Activated CD4-positive, alpha-beta T cell treated with anti-CD3 and anti-CD28 coated beads, Interleukin-2, amount 10 ng/mL, durations not matched to agents 24 days and 14 days (primary cell): ENCODE measurements at regions of chr6 and their contacts with region 1.

Region 1: GRCh38 chr6:30742316-30743098 is at the start of gene FLOT1:
- DNase-seq: peak; percentile 98
- H3K4me3 Mint-ChIP-seq: peak within 1 kb of the TSS; percentile 98
- H3K27ac Mint-ChIP-seq: peak within 1 kb of the TSS; percentile 94
- H3K4me1 Mint-ChIP-seq: peaks cover 60% of the 10 kb centered on the region
- H3K27me3 Mint-ChIP-seq: no peaks in the 10 kb centered on the region
- total RNA-seq, gene FLOT1: 239 and 260 TPM in 2 replicates

Region 2: DNA sequence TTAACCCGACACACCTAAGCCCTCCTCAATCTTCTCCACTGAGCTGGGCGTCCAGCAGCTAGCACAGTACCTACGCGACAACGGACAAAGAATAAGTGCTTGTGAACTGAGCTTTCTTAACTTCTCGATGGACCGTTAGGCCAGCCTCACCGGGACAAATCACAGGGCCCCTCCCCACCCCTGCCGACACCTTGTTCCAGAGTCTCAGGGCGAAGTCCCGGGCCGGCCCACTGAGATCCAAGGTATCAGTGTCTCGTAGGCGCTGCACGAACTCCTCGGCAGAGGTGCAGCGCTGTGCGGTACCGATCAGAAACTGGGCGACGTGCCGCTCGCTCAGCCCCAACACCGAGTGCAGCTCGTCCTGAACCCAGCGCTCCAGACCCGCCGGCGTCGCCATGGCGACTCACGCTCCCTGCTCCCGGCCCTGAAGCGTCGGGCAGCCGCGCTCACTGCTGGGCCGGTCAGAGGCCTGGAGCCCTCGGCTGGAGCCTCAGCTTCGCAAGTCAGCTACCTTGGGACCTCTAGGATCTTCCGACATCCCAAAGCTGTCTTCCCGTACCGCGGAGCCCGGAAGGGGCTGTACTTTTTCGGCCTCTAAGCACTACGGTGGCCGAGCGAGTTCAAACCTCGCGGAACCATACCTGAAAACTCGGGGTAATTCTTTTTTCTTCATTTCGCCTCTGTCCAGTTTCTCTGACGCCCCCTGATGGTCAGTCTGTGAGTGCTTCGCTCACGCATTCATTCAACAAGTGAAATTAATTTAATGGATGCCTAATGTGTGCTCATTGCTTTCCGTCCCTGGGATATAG is 69.9 kb before region 1 on chr6 and contains the start of gene DHX16:
- intact Hi-C with region 1: no loop called
- DNase-seq: peak; percentile 97
- H3K4me3 Mint-ChIP-seq: peak within 1 kb of the TSS; percentile 80
- H3K27ac Mint-ChIP-seq: peak within 1 kb of the TSS; percentile 54
- H3K4me1 Mint-ChIP-seq: peaks cover 32% of the 10 kb centered on the region
- H3K27me3 Mint-ChIP-seq: no peaks in the 10 kb centered on the region
- total RNA-seq, gene DHX16: 53.4 and 56.7 TPM in 2 replicates

Region 3: DNA sequence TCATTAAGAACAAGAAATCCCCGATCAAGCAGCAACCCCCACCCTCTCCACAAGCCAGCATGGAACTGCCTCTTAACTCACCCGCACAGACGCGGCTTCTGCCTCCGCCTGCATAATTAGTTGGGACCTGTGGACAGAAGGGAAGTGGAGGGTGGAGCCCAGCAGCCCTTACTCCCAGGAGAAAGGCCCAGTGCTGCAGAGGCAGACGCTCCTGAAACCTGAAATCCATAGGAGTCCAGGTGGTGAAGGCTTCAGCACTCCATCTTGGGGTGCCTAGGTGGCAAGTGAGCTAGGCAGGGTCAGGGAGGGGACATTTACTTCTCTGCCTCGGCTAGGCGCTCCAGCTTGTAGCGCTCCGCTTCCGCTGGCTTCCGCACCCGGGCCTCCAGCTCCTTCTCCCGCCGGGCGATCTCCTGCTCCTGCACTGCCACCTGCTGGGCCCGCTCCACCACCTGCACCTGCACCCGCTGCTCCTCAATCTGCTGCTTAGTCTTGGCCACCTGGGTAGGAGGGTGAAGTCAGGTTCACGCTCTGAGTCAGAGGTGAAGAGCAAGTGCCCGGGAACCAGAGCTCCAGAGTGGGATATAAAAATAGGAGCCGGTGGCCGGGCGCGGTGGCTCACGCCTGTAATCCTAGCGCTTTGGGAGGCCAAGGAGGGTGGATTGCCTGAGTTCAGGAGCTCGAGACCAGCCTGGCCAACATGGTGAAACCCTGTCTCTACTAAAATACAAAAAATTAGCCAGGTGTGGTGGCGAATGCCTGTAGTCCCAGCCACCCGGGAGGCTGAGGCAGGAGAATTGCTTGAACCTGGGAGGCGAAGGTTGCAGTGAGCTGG is 11.7 kb before region 1 on chr6:
- intact Hi-C with region 1: loop called (anchors 1 kb)
- DNase-seq: peak; percentile 95
- H3K4me3 Mint-ChIP-seq: peak overlapping the region; percentile 75
- H3K27ac Mint-ChIP-seq: peak overlapping the region; percentile 87
- H3K4me1 Mint-ChIP-seq: peaks cover 49% of the 10 kb centered on the region
- H3K27me3 Mint-ChIP-seq: no peaks in the 10 kb centered on the region

Region 4: DNA sequence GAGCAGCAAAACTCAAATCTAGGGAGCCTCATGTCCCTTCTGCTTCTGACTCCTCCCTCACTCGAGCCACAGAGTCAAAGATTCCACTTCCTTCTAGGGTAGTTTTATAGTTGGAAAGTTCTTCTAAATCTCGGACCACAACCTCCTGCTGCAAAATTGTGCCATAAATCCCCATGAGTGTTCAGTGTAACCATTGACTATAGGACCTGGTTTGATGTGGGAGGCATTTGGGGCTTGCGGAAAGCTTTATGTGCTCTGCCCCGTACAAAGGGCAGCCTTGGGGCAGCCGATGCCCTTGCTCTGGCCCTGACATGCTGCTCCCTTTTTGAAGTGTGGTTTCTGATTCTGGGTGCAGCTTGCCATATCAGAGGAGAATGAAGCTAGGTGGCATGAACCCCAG is 45.4 kb after region 1 on chr6:
- intact Hi-C with region 1: loop called (anchors 1 kb)
- DNase-seq: peak; percentile 82
- H3K4me3 Mint-ChIP-seq: peak overlapping the region; percentile 72
- H3K27ac Mint-ChIP-seq: peak overlapping the region; percentile 94
- H3K4me1 Mint-ChIP-seq: peaks cover 55% of the 10 kb centered on the region
- H3K27me3 Mint-ChIP-seq: no peaks in the 10 kb centered on the region

Region 5: DNA sequence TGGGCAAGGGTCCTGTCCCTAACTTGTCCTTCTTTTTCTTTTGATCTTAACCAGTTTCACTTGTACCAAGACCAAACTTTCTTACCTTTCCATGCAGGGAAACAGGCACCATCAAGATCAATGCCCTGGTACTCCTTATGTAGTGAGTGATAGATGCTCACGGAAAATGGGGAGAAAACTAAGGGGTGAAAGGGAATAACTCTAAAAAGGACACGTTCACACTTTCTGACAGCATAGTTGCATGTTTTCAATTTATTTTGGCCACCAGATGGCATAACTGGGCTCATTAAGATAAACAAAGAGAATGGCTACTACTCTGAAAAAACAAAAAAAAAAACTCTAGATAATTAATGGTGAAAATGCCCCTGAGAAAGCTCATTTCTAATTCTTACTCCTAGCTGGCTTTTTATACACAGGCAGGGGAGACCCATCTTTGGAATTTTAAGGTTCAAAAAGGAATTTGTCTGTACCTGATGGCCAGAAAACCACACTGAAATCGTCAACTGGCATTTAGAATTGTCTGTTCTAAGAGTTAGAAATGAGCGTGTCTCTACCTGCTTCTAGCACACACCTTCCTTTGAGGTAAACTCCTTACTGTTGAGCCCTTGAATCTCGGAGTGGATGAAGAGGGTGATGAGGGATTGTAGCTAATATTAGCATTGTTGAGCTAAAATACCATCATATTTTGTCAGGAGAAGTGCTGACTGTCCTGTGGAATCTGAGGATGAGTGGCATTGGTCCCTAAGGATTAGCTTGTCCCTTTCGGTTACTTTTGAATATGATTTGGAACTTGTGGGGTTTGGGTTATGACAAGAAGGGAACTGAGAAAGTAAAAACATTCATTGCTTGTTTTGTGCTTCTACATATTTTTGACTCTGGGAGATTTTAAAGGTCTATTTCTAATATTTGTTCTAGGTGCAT is 79.6 kb after region 1 on chr6:
- intact Hi-C with region 1: loop called (anchors 1 kb)
- DNase-seq: peak; percentile 75
- H3K4me3 Mint-ChIP-seq: no peak overlapping the region
- H3K27ac Mint-ChIP-seq: peak overlapping the region; percentile 77
- H3K4me1 Mint-ChIP-seq: peaks cover 67% of the 10 kb centered on the region
- H3K27me3 Mint-ChIP-seq: no peaks in the 10 kb centered on the region

Region 6: DNA sequence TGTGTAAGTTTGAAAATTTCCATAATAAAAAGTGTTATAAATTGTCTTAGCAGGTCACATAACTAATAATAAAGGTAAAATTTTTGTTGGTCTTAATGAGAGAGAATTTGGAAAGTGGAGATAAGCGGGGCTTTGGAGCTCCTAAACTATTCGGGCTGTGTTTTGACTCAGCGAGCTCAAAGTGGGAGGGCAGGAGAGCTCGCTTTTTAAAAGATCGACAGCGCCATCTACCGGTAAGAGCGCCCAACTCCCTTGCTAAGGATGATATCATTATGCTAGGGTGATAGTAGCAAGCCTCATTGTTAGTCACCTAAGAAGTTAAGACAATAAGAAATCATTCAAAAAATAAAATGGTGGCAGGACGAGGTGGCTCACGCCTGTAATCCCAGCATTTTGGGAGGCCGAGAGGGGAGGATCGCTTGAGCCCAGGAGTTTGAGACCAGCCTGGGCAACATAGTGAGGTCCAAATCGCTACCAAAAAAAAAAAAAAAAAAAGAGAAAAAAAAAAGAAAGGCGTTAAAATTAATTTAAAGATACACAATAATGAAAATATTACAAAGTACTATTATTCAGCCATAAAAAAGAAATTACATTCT is 345.1 kb after region 1 on chr6:
- intact Hi-C with region 1: loop called (anchors 5 kb)
- DNase-seq: peak; percentile 96
- H3K4me3 Mint-ChIP-seq: no peak overlapping the region
- H3K27ac Mint-ChIP-seq: no peak overlapping the region
- H3K4me1 Mint-ChIP-seq: peaks cover 11% of the 10 kb centered on the region
- H3K27me3 Mint-ChIP-seq: peaks cover 16% of the 10 kb centered on the region